Endothelial cell of umbilical vein (primary cell): ENCODE measurements at regions of chr11 and their contacts with region 1.

Region 1: GRCh38 chr11:6443269-6444003 is 2.6 kb upstream of the HPX start:
- DNase-seq: peak; percentile 56
- H3K4me3 ChIP-seq: no peak overlapping the region
- H3K27ac ChIP-seq: no peak overlapping the region
- H3K4me1 ChIP-seq: no peaks in the 10 kb centered on the region
- H3K27me3 ChIP-seq: no peaks in the 10 kb centered on the region
- CTCF ChIP-seq: peak; percentile 78 to 93
- POLR2A ChIP-seq: no peak

Region 2: DNA sequence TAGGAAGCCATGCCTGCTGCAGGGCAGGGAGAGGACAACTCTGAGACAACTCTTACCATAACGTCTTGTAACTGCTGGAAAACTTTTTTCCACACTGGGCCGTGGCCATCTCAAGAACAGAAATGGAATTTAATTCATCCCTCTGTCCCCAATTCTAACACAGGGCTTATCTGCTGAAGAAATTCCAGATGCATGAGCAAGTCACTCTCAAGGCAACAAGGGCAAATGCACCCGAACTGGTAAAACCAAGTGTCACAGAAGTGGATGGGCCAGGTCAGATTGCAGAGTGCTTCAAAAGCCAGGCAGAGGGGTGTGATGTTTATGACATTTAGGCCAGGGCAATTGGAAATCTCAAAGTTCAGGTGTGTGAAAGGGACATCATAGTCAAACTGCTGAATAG is 45.8 kb before region 1 on chr11:
- CTCF ChIA-PET with region 1: interaction called, 10 read pairs
- POLR2A ChIA-PET with region 1: no interaction called
- dilution Hi-C with region 1: no loop called
- intact Hi-C with region 1: no loop called
- DNase-seq: no peak
- H3K4me3 ChIP-seq: no peak overlapping the region
- H3K27ac ChIP-seq: no peak overlapping the region
- H3K4me1 ChIP-seq: no peaks in the 10 kb centered on the region
- H3K27me3 ChIP-seq: no peaks in the 10 kb centered on the region
- CTCF ChIP-seq: no peak
- POLR2A ChIP-seq: no peak

Region 3: GRCh38 chr11:6419009-6419631 is 24.3 kb before region 1 on chr11 and contains the start of gene APBB1:
- CTCF ChIA-PET with region 1: interaction called, 27 read pairs
- POLR2A ChIA-PET with region 1: interaction called, 4 read pairs
- dilution Hi-C with region 1: no loop called
- intact Hi-C with region 1: no loop called
- DNase-seq: peak; percentile 67
- H3K4me3 ChIP-seq: peak within 1 kb of the TSS; percentile 78 to 88 (median 86)
- H3K27ac ChIP-seq: no peak within 1 kb of the TSS
- H3K4me1 ChIP-seq: peaks cover 10% of the 10 kb centered on the region
- H3K27me3 ChIP-seq: peaks cover 7 to 14% of the 10 kb centered on the region in 2 experiments
- CTCF ChIP-seq: peak in 1 of 2 donors; percentile 18
- POLR2A ChIP-seq: peak; percentile 79
- total RNA-seq, gene APBB1: 44.3 and 48.0 TPM in 2 replicates

Region 4: DNA sequence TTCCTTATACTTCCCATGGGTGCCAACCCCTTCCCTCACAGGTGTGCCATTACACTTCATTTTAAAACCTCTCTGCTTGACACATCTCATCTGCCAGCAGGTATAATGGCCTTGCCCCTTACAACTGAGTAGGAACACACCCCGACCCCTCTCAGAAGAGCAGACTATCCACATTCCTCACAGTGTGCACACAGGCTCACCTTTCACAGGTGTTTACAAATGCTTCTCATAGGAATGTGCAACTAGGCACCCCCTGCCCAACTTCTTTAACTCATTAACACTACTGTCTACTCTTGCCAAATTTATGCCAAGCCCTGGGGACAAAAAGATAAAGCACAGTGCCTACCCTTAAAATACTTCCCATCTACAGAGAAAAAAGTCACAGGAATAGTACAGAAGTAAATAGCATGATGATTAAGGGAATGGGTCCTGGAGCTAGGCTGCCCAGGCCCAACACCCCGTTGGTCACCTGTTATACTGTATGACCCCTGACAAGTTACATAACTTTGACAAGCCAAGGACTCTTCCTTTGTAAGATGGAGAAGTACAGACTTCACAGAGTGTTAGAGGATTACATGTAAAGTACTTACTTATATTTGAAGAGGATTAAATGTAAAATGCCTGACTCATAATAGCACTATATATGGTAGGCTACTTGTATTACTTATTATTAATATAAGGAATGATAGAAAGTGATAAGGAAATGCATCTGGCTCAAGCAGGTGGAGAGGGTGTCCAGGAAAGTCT is 15.1 kb after region 1 on chr11:
- CTCF ChIA-PET with region 1: interaction called, 23 read pairs
- POLR2A ChIA-PET with region 1: no interaction called
- dilution Hi-C with region 1: no loop called
- intact Hi-C with region 1: no loop called
- DNase-seq: no peak
- H3K4me3 ChIP-seq: no peak overlapping the region
- H3K27ac ChIP-seq: no peak overlapping the region
- H3K4me1 ChIP-seq: no peaks in the 10 kb centered on the region
- H3K27me3 ChIP-seq: no peaks in the 10 kb centered on the region
- CTCF ChIP-seq: no peak
- POLR2A ChIP-seq: no peak

Region 5: DNA sequence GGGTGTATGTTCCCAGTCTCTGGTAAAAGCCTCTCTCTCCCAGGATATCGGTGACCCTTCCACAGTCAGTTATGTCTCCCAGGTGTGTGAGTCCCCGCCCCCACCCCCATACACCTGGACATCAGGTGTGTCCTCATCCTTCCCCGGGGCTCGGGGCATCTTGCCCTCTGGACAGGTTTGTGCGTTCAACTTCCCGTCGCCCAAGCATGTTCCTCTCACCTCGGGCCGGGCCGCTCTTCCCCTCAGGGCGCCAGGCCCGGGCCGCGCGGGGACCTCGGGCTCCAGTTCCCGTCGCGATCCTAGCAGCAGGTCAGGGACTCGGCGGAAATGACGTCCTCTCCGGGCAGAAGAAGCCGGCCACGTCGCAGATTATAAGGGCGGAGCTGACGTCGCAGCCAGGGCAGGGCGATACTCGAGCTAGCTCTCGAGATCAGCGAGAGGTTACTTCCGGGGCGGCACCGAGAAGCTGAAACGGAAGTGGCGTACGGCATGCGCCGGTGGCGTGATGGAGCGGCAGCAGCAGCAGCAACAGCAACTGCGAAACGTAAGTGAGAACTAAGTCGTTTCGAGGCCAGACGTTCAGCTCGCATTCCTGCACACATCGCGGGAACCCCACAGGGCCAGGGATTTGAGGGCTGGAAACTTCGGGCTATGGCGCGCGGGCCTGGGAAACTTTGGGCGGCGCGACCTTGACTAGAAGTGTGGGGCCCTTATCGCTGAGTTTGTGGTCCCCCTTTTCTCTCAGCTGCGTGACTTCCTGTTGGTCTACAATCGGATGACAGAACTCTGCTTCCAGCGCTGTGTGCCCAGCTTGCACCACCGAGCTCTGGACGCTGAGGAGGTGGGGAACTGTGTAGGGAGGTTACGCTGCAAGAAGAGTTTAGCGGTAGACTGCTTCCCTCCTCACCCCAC is 37.8 kb after region 1 on chr11 and contains the starts of genes ARFIP2 and TIMM10B:
- CTCF ChIA-PET with region 1: interaction called, 13 read pairs
- POLR2A ChIA-PET with region 1: no interaction called
- dilution Hi-C with region 1: no loop called
- intact Hi-C with region 1: no loop called
- DNase-seq: peak; percentile 98
- H3K4me3 ChIP-seq: peak within 1 kb of the TSS; percentile 19 to 65 (median 57)
- H3K27ac ChIP-seq: peak within 1 kb of the TSS; percentile 72
- H3K4me1 ChIP-seq: peaks cover 18% of the 10 kb centered on the region
- H3K27me3 ChIP-seq: no peaks in the 10 kb centered on the region
- CTCF ChIP-seq: no peak
- POLR2A ChIP-seq: peak; percentile 70
- total RNA-seq, gene ARFIP2: 46.7 and 48.4 TPM in 2 replicates
- total RNA-seq, gene TIMM10B: 29.2 and 31.3 TPM in 2 replicates

Region 6: GRCh38 chr11:6705905-6706535 is 262.6 kb after region 1 on chr11:
- CTCF ChIA-PET with region 1: interaction called, 9 read pairs
- POLR2A ChIA-PET with region 1: no interaction called
- dilution Hi-C with region 1: no loop called
- intact Hi-C with region 1: loop called (anchors 1 kb)
- DNase-seq: peak; percentile 66
- H3K4me3 ChIP-seq: no peak overlapping the region
- H3K27ac ChIP-seq: no peak overlapping the region
- H3K4me1 ChIP-seq: peaks cover 6% of the 10 kb centered on the region
- H3K27me3 ChIP-seq: no peaks in the 10 kb centered on the region
- CTCF ChIP-seq: peak; percentile 72 to 78
- POLR2A ChIP-seq: no peak